ENCODE measurements at regions of chr6 and their contacts with region 1.

Region 1: GRCh38 chr6:170529839-170530469 is 23.2 kb downstream of the PSMB1 start:
- DNase-seq: peak; percentile 75
- H3K4me3 Mint-ChIP-seq: no peak overlapping the region
- H3K27ac Mint-ChIP-seq: no peak overlapping the region
- H3K4me1 Mint-ChIP-seq: no peaks in the 10 kb centered on the region
- H3K27me3 Mint-ChIP-seq: no peaks in the 10 kb centered on the region

Region 2: DNA sequence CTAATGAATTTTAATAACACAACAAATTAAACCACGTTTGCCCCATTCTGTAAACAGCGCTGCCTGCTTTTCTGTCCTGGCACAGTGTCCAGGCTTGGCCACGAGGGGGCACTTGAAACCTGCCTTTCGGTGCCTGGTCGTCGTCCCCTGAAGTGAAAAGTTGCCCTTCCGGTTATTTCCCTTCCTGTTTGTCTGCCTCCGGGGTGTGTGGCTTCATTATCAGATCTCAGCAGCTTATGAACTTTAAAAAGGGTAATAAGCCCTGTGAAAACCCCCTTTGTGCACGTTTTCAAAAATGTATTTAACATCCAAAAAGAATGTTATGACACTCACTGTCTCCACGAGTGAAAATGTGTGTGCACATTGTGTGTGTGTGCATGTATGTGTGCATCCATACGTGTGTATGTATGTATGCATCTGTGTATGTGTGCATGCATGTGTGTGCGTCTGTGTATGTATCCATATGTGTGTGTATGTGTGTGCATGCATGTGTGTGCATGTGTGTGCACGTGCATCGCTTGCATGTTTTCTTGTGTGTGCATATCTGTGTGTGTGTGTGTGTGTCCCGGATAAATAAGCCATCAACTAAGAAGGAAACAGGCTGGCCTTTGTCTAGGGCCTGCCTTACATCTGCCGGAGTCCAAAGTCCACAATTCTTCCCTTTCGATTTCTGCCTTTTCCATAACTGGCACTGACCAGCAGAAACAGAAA is 1634.7 kb before region 1 on chr6:
- CTCF ChIA-PET with region 1: interaction called, 3 read pairs
- POLR2A ChIA-PET with region 1: no interaction called
- intact Hi-C with region 1: loop called (anchors 10 kb)
- DNase-seq: peak; percentile 87
- H3K4me3 Mint-ChIP-seq: peak overlapping the region; percentile 30
- H3K27ac Mint-ChIP-seq: peak overlapping the region; percentile 68
- H3K4me1 Mint-ChIP-seq: peaks cover 15% of the 10 kb centered on the region
- H3K27me3 Mint-ChIP-seq: no peaks in the 10 kb centered on the region

Region 3: DNA sequence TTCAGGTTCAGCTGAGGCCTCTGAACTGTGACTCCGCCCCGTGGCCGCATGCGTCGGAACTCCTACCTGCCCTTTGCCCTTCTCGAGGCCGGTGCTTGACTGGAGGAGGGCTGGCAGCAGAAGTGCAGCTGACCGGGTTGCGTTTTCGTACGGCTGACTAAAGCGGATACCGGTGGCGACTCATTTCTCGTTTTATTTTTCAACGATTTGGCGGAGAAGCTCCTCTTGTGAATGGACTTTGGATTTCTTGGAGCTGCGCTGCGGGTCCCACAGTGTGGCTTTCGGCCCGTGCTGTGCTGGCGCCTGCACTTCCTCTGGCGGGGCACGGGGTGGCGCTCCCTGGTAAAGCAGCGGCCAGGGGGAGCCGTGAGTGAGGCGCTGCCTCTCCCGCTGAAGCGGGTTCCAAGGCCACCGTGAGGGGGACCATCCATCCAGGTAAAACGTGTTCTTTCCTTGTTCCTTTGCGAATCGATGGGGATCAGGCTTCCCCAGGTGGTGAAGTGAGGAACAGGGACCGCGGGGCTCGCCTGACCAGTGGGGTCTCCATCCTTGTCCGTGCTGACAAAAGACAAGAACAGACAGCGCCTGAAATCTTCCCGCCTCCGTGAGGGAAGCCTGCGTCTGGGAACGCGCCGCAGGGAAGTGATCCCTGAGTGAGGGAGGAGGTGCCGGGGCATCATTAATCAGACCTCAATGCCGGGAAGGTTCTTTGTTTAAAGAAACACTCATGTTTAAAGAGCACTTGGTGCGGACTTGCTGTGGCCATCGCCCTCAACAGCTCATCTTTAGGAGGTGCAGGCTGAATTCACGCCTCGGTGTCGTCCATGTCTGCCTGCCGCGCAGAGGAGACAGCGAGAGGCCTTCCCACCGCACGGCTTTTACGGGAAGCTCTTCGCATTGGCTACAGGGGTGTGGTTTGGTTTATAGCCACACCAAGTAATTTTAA is 739.7 kb before region 1 on chr6:
- CTCF ChIA-PET with region 1: interaction called, 12 read pairs
- POLR2A ChIA-PET with region 1: no interaction called
- intact Hi-C with region 1: no loop called
- DNase-seq: peak; percentile 84
- H3K4me3 Mint-ChIP-seq: peak overlapping the region; percentile 78
- H3K27ac Mint-ChIP-seq: peak overlapping the region; percentile 38
- H3K4me1 Mint-ChIP-seq: peaks cover 19% of the 10 kb centered on the region
- H3K27me3 Mint-ChIP-seq: peaks cover 7% of the 10 kb centered on the region

Region 4: DNA sequence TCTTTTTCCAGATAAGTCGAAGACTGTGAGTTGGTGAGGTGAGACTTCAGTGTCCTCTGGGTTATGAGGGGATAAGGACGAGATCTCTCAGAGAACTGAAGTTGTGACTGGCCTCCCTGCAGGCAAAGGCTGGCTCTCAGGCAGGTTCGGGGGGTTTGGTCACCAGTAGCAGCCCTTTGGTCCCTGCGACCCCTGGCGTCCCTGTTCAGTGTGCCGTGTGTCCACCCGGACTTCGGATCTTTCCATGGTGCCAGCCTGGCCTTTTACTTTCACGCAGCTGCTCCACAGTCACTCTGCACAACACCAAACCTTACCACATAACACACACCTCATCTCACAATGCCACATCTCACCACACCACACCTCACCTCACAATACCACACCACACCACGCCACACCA is 646.6 kb before region 1 on chr6:
- CTCF ChIA-PET with region 1: no interaction called
- POLR2A ChIA-PET with region 1: no interaction called
- intact Hi-C with region 1: no loop called
- DNase-seq: no peak
- H3K4me3 Mint-ChIP-seq: no peak overlapping the region
- H3K27ac Mint-ChIP-seq: no peak overlapping the region
- H3K4me1 Mint-ChIP-seq: no peaks in the 10 kb centered on the region
- H3K27me3 Mint-ChIP-seq: peaks cover 12% of the 10 kb centered on the region

Region 5: GRCh38 chr6:169950558-169950957 is 579.4 kb before region 1 on chr6:
- CTCF ChIA-PET with region 1: interaction called, 4 read pairs
- POLR2A ChIA-PET with region 1: no interaction called
- intact Hi-C with region 1: loop called (anchors 5 kb)
- DNase-seq: peak; percentile 42
- H3K4me3 Mint-ChIP-seq: no peak overlapping the region
- H3K27ac Mint-ChIP-seq: no peak overlapping the region
- H3K4me1 Mint-ChIP-seq: no peaks in the 10 kb centered on the region
- H3K27me3 Mint-ChIP-seq: no peaks in the 10 kb centered on the region

Region 6: DNA sequence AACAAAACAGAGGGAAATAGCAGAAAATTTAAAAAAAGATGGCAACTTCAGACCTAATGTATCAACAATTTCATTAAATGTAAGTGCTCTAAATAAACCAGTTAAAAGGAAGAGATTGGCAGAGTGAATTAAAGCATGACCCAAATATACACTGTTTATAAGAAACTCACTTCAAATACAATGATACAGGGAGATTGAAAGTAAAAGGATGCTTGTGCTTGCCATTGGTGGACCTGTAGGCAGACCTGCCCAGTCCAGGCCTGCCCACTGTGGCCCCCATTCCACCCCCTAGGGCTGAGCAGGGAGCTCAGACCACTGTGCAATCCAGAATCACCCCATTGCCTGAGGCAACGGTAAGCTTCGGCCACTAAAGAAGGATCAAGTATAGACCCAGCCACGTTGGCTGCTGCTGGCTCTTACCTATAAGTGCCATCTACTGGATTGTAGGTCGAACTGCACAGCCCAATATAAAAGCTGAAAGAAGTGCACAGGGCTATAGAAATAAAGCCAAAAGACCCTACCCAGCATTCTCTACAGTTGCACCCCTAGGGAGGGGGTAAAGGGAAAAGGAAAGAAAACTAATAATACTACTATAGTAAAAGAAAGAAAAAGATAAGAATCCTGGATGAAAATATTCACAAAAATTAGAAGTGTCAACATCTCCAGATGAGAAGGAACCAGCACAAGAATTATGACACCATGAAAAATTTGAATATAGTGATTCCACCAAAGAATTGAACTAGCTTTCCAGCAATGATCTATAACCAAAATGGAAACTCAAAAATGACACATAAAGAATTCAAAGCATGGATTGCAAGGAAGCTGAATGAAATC is 13.0 kb before region 1 on chr6:
- CTCF ChIA-PET with region 1: interaction called, 20 read pairs
- POLR2A ChIA-PET with region 1: no interaction called
- intact Hi-C with region 1: no loop called
- DNase-seq: peak; percentile 46
- H3K4me3 Mint-ChIP-seq: no peak overlapping the region
- H3K27ac Mint-ChIP-seq: no peak overlapping the region
- H3K4me1 Mint-ChIP-seq: no peaks in the 10 kb centered on the region
- H3K27me3 Mint-ChIP-seq: peaks cover 6% of the 10 kb centered on the region

Region 7: DNA sequence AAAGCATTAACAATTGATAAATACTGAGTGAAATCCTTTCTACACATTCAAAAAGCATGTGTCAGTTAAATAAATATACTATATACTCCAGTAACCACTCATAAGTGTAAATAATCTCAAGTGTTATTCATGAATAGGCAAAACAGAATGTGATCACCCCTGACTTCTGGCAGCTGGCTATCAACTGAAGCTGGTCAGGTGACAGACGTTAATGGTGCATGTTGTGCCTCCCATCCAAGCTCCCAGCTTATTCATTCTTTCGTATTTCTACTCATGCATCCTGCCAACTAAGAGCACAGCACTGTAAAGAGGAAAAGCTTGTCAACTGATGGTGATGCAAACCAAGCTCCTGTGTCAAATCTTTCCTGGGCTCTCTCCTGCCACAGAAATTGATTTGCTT is 15.5 kb after region 1 on chr6:
- CTCF ChIA-PET with region 1: interaction called, 10 read pairs
- POLR2A ChIA-PET with region 1: no interaction called
- intact Hi-C with region 1: no loop called
- DNase-seq: no peak
- H3K4me3 Mint-ChIP-seq: no peak overlapping the region
- H3K27ac Mint-ChIP-seq: no peak overlapping the region
- H3K4me1 Mint-ChIP-seq: peaks cover 45% of the 10 kb centered on the region
- H3K27me3 Mint-ChIP-seq: no peaks in the 10 kb centered on the region

Region 8: DNA sequence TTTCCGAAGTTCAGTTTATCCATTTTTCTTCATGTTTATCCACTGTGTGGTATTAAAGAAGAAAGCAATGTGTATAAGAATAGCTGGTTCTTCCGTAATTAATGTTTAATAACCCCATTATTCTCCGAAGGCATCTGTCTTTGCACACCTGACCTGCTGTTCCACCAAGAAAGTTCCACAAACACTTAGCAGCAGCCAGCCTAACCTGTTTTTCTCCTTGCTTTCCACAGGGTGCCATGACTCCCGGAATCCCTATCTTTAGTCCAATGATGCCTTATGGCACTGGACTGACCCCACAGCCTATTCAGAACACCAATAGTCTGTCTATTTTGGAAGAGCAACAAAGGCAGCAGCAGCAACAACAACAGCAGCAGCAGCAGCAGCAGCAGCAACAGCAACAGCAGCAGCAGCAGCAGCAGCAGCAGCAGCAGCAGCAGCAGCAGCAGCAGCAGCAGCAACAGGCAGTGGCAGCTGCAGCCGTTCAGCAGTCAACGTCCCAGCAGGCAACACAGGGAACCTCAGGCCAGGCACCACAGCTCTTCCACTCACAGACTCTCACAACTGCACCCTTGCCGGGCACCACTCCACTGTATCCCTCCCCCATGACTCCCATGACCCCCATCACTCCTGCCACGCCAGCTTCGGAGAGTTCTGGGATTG is 31.7 kb after region 1 on chr6:
- CTCF ChIA-PET with region 1: no interaction called
- POLR2A ChIA-PET with region 1: no interaction called
- intact Hi-C with region 1: no loop called
- DNase-seq: no peak
- H3K4me3 Mint-ChIP-seq: no peak overlapping the region
- H3K27ac Mint-ChIP-seq: no peak overlapping the region
- H3K4me1 Mint-ChIP-seq: peaks cover 31% of the 10 kb centered on the region
- H3K27me3 Mint-ChIP-seq: no peaks in the 10 kb centered on the region

Region 9: GRCh38 chr6:170590725-170591124 is 60.8 kb after region 1 on chr6:
- CTCF ChIA-PET with region 1: no interaction called
- POLR2A ChIA-PET with region 1: no interaction called
- intact Hi-C with region 1: no loop called
- DNase-seq: no peak
- H3K4me3 Mint-ChIP-seq: no peak overlapping the region
- H3K27ac Mint-ChIP-seq: no peak overlapping the region
- H3K4me1 Mint-ChIP-seq: no peaks in the 10 kb centered on the region
- H3K27me3 Mint-ChIP-seq: peaks cover 24% of the 10 kb centered on the region

Measured in activated CD4-positive, alpha-beta memory T cell treated with anti-CD3 and anti-CD28 coated beads for 36 hours (primary cell).